CD8-positive, alpha-beta T cell (primary cell): ENCODE measurements at regions of chr18 and their contacts with region 1.

Region 1: DNA sequence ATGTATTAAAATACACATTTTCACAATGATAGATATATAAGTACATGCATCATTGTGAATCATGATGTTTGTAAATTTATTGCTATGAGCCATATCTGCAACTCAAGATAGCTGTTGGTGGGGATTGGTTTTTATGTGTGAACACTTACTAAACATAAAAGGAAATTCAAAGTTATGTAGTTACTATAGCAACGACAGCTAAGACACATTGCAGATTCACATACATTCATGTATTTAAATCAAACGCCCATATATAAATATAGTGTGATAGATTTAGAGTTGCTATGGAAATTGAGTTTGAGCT is 65.6 kb downstream of the MAPRE2 start:
- DNase-seq: peak in 2 of 9 experiments; percentile 46 to 72
- ATAC-seq: peak; percentile 69
- H3K4me3 ChIP-seq: no peak overlapping the region
- H3K4me3 Mint-ChIP-seq: no peak overlapping the region
- H3K27ac ChIP-seq: peak overlapping the region; percentile 53 to 64
- H3K27ac Mint-ChIP-seq: peak overlapping the region; percentile 77
- H3K4me1 ChIP-seq: peaks cover 37% of the 10 kb centered on the region
- H3K4me1 Mint-ChIP-seq: peaks cover 65% of the 10 kb centered on the region
- H3K27me3 ChIP-seq: no peaks in the 10 kb centered on the region
- H3K27me3 Mint-ChIP-seq: no peaks in the 10 kb centered on the region
- CTCF ChIP-seq: no peak

Region 2: GRCh38 chr18:35071819-35072247 is 35.0 kb before region 1 on chr18:
- CTCF ChIA-PET with region 1: no interaction called
- POLR2A ChIA-PET with region 1: interaction called, 4 read pairs
- intact Hi-C with region 1: loop called in 1 of 2 experiments (anchors 5 kb)
- DNase-seq: no peak
- ATAC-seq: no peak
- H3K4me3 ChIP-seq: no peak overlapping the region
- H3K4me3 Mint-ChIP-seq: no peak overlapping the region
- H3K27ac ChIP-seq: no peak overlapping the region
- H3K27ac Mint-ChIP-seq: peak overlapping the region; percentile 53
- H3K4me1 ChIP-seq: peaks cover 6% of the 10 kb centered on the region
- H3K4me1 Mint-ChIP-seq: peaks cover 70% of the 10 kb centered on the region
- H3K27me3 ChIP-seq: no peaks in the 10 kb centered on the region
- H3K27me3 Mint-ChIP-seq: no peaks in the 10 kb centered on the region
- CTCF ChIP-seq: no peak